ENCODE measurements at regions of chr6 and their contacts with region 1.

Region 1: DNA sequence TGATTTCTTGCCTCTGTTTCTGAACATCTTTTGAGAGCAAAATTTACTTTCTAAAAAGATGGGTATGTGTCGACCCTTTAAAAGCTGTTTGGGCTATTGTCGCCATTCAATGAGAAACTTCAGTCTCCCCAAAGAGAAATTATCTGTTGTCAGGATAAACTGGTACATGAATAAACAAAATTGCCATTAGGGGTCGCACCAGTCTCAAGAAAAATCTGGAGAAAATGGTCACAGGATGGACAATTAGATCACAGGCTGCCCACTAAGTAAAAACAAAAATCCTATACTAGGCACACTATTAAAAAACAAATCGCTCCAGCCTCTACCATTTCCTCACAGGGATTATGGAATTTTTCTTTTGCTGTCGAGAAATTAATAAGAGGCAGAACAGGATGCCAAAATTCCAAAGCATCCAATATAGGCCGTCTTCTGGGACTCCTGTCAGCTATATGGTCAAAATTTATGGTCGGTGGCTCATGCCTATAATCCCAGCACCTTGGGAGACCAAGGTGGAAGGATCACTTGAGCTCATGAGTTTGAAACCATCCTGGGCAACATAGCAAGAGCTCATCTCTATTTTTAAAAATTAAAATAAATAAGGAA is 5.5 kb upstream of the HLA-E start:
- DNase-seq: no peak
- H3K4me3 ChIP-seq: no peak overlapping the region
- H3K27ac ChIP-seq: no peak overlapping the region
- H3K27me3 ChIP-seq: peaks cover 34% of the 10 kb centered on the region
- CTCF ChIP-seq: peak; percentile 64

Region 2: GRCh38 chr6:30463651-30464618 is 19.8 kb before region 1 on chr6:
- CTCF ChIA-PET with region 1: interaction called, 28 read pairs
- POLR2A ChIA-PET with region 1: no interaction called
- DNase-seq: no peak
- H3K4me3 ChIP-seq: no peak overlapping the region
- H3K27ac ChIP-seq: no peak overlapping the region
- H3K27me3 ChIP-seq: peaks cover 87% of the 10 kb centered on the region
- CTCF ChIP-seq: no peak

Region 3: DNA sequence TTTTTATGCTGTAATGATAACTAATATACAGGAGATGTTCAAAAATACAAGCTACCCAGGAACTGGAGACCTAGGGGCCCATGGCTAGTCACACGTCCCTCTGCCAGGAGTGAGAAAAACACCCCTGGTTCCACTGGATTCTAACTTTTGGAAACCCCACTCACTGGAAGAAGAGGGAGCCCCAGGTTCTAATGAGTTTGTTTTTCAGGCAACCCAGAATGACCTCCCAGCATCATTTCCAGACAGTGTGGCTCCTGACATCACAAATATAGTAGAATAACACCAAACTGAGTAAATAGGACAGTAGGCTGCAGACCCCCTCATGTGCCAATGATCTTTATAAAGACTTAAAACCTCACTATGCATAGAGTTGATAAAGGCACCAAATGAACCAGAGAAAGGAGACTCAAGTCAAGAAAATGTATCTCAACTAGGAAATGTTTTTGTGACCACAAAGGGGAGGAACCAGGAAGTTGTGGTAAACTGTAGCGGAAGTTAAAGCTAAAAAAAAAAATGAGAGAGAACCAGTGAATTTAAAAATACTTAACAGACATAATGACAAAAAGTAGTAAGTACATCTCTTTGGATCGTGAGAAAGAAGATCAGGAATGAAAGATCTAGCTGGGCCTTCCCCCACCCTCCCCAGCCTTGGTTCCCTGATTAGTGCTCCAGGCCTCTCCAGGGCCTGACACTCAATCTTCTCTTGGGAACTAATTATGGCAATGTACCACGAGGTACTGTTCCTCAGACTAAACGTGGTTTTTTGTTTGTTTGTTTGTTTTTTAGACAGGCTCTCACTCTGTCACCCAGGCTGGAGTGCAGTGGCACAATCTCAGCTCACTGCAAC is 25.3 kb after region 1 on chr6:
- CTCF ChIA-PET with region 1: interaction called, 13 read pairs
- POLR2A ChIA-PET with region 1: no interaction called
- DNase-seq: no peak
- H3K4me3 ChIP-seq: no peak overlapping the region
- H3K27ac ChIP-seq: no peak overlapping the region
- H3K27me3 ChIP-seq: no peaks in the 10 kb centered on the region
- CTCF ChIP-seq: no peak

Region 4: GRCh38 chr6:30590994-30591393 is 107.2 kb after region 1 on chr6:
- CTCF ChIA-PET with region 1: interaction called, 29 read pairs
- POLR2A ChIA-PET with region 1: no interaction called
- DNase-seq: peak; percentile 48
- H3K4me3 ChIP-seq: no peak overlapping the region
- H3K27ac ChIP-seq: peak overlapping the region; percentile 66
- H3K27me3 ChIP-seq: no peaks in the 10 kb centered on the region
- CTCF ChIP-seq: no peak

Region 5: GRCh38 chr6:30769088-30769852 is 285.5 kb after region 1 on chr6:
- CTCF ChIA-PET with region 1: no interaction called
- POLR2A ChIA-PET with region 1: no interaction called
- DNase-seq: peak; percentile 86
- H3K4me3 ChIP-seq: peak overlapping the region; percentile 49
- H3K27ac ChIP-seq: peak overlapping the region; percentile 100
- H3K27me3 ChIP-seq: no peaks in the 10 kb centered on the region
- CTCF ChIP-seq: no peak

Measured in AG04450 (cell line).